Activated B cell treated with CpG ODN at 0.5 μM for 24 hours (primary cell): ENCODE measurements at regions of chr7 and their contacts with region 1.

Region 1: DNA sequence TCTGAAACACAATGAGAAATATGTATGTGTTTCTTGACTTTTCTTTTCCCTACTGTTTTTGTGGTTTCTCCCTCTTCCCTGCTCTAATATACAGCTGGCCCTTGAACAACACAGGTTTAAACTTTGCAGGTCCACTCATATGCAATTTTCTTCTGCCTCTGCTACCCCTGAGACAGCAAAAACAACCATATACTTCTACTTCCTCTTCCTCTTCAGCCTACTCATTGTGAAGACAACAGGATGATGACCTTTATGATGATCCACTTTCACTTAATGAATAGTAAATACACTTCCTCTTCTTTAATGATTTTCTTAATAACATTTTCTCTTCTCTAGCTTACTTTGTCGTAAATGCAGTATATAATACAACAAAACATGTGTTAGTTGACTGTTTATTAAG is 35.0 kb upstream of the DGKB start:
- DNase-seq: no peak
- ATAC-seq: no peak
- H3K4me3 Mint-ChIP-seq: no peak overlapping the region
- H3K27ac Mint-ChIP-seq: no peak overlapping the region
- H3K4me1 Mint-ChIP-seq: no peaks in the 10 kb centered on the region
- H3K27me3 Mint-ChIP-seq: no peaks in the 10 kb centered on the region
- CTCF ChIP-seq: no peak

Region 2: DNA sequence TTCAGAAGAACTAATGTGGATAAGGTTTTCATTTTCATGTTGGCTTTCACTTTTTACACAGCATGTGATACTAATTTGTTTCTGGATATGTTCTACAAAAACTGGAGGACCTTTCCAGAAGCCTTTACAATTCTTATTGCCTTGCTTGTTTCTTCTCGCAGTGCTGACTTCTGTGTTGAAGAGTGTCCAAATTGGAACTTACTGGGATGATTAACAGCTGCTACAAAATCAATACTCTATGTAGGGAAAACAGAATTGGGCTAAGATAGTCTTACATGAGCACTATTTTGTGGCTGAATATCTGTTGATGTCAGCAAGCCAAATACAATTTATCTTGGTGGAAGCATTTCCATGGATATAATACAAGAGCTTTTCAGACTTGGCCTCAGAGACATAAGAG is 386.3 kb before region 1 on chr7:
- CTCF ChIA-PET with region 1: no interaction called
- POLR2A ChIA-PET with region 1: no interaction called
- intact Hi-C with region 1: no loop called
- DNase-seq: no peak
- ATAC-seq: no peak
- H3K4me3 Mint-ChIP-seq: no peak overlapping the region
- H3K27ac Mint-ChIP-seq: no peak overlapping the region
- H3K4me1 Mint-ChIP-seq: no peaks in the 10 kb centered on the region
- H3K27me3 Mint-ChIP-seq: no peaks in the 10 kb centered on the region
- CTCF ChIP-seq: no peak

Region 3: DNA sequence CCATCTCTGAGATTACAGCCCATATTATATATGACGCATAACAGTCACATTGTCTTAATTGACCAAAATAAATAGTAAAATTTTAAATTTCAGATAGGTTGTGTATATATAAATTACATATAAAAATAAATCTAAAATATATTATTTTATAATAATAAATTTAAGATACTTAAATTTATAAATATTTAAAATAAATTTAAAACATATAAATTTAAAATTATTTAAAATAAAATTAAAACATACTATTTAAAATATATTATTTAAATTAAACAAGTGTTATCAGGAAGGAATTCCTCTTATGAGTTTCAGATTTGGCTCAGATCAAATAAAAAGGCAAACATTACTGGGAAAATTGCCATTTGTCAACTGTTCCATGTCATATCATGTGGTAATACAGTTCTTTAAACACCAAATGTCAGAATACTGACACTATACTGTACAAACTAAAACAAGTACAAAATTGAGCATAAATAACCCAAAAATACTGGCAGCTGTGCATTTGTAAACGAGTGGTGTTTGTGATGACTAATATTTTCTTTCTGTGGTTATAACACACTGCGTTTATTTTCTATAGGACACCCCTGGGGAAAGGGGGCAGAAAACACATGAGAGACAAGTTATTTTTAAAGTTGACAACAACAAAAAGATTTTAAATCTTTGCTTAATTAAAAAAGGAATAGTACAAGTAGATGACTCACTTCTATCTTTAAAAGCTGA is 36.3 kb after region 1 on chr7:
- CTCF ChIA-PET with region 1: no interaction called
- POLR2A ChIA-PET with region 1: no interaction called
- intact Hi-C with region 1: loop called (anchors 1 kb)
- DNase-seq: no peak
- ATAC-seq: no peak
- H3K4me3 Mint-ChIP-seq: no peak overlapping the region
- H3K27ac Mint-ChIP-seq: no peak overlapping the region
- H3K4me1 Mint-ChIP-seq: no peaks in the 10 kb centered on the region
- H3K27me3 Mint-ChIP-seq: no peaks in the 10 kb centered on the region
- CTCF ChIP-seq: no peak